Naive thymus-derived CD8-positive, alpha-beta T cell (primary cell): ENCODE measurements at regions of chr5 and their contacts with region 1.

Region 1: GRCh38 chr5:178113199-178113787 is at the start of gene N4BP3:
- DNase-seq: peak; percentile 63 to 86 (median 72)
- ATAC-seq: peak; percentile 42 to 54
- H3K4me3 Mint-ChIP-seq: peak within 1 kb of the TSS; percentile 88 to 98 (median 94)
- H3K27ac Mint-ChIP-seq: peak within 1 kb of the TSS; percentile 84 to 98 (median 96)
- H3K4me1 Mint-ChIP-seq: peaks cover 26 to 56% (median 47%) of the 10 kb centered on the region in 4 donors
- H3K27me3 Mint-ChIP-seq: peaks cover 0 to 4% (median 0%) of the 10 kb centered on the region in 5 donors
- polyA plus RNA-seq, gene N4BP3: 1.6 to 5.5 (median 2.0) TPM

Region 2: DNA sequence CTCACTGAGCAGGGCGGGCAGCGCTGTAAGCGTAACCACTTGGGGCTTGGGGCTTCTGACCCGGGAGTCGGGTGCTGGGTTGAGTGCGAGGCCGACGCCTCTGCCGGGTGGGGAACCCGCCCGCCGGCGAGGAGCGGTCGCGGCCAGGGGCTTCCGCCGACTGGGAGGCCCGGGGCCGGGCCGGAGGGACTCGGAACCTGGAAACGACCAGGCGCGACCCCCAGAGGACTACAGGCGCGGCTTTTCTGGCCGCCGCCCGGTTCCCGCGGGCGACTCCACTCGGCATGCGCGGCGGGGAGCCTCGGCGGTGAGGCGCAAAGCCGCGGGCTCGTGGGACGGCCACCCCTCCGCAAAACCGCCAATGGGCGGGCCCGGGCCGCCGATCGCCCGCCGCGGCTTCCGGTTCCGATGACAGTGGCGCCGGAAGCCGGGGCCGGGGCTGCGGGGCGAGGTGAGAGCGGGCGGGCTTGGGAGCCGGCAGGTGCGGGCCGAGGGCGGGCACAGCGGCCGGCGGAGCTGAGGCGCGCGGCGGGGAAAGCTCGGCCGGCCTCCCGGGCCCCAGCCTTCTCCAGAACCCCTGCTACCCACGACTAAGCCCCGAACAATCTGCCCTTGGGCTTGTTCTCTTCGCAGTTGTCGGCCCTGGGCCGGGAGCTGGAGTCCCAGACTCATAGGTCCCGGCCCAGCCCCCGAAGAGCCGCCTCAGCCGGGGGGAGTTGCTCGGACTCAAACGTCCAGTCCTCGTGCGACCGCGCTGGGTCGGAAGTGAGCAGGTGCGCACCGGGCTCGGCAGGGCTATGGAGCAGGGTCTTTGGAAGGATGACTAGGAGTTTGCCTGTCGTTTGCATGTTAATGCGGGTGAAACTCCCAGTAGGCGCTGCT is 17.6 kb after region 1 on chr5 and contains the start of gene RMND5B:
- POLR2A ChIA-PET with region 1: interaction called, 37 read pairs
- DNase-seq: peak; percentile 62 to 85 (median 74)
- ATAC-seq: peak; percentile 86 to 91
- H3K4me3 Mint-ChIP-seq: peak within 1 kb of the TSS; percentile 63 to 93 (median 86)
- H3K27ac Mint-ChIP-seq: peak within 1 kb of the TSS; percentile 79 to 95 (median 87)
- H3K4me1 Mint-ChIP-seq: peaks cover 20 to 58% (median 39%) of the 10 kb centered on the region in 4 donors
- H3K27me3 Mint-ChIP-seq: no peaks in the 10 kb centered on the region
- polyA plus RNA-seq, gene RMND5B: 24.9 to 39.0 (median 36.8) TPM

Region 3: DNA sequence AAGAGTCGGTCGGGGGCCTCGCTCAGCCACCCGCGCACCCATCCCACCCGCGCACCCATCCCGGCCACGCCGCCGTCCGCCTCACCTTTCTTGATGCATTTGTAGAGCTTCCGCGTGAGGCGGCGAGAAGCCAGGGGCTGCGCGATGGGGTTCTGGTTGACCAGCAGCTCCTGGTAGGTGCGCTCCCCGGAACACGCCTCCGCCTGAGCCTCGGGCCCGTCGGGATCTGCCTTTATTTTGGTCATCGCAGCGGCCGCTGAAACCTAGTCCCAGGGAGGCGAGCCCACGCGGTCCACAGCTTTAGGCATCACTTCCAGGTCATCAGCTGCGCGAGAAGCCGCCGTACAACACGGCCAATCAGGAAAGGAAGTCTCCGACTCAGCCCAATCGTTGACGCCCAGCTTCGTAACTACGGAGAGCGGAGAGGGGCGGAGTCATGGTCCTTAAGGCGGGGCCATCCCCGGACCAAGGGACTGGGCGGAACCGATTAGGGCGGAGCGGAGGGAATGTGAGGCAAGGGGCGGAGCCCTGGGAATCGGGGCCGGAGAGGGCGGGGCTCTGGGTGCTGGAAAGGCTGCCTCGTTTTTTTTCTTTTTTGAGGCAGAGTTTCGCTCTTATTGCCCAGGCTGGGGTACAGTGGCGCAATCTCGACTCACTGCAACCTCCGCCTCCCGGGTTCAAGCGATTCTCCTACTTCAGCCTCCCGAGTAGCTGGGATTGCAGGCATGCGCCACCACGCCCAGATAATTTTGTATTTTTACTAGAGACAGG is 40.5 kb after region 1 on chr5 and contains the start of gene NHP2:
- POLR2A ChIA-PET with region 1: interaction called, 11 read pairs
- DNase-seq: peak; percentile 91 to 98 (median 95)
- ATAC-seq: peak; percentile 98
- H3K4me3 Mint-ChIP-seq: peak within 1 kb of the TSS; percentile 88 to 98 (median 97)
- H3K27ac Mint-ChIP-seq: peak within 1 kb of the TSS; percentile 89 to 97 (median 94)
- H3K4me1 Mint-ChIP-seq: peaks cover 12 to 46% (median 41%) of the 10 kb centered on the region in 4 donors
- H3K27me3 Mint-ChIP-seq: no peaks in the 10 kb centered on the region
- polyA plus RNA-seq, gene NHP2: 238 to 276 (median 270) TPM